Gastrocnemius medialis (tissue), 4 donors: ENCODE measurements at regions of chr21 and their contacts with region 1.

Region 1: GRCh38 chr21:25857308-25858074 is 122.7 kb downstream of the GABPA start:
- DNase-seq: no peak
- ATAC-seq: no peak
- H3K4me3 ChIP-seq: no peak overlapping the region
- H3K27ac ChIP-seq: no peak overlapping the region
- H3K4me1 ChIP-seq: no peaks in the 10 kb centered on the region
- H3K27me3 ChIP-seq: no peaks in the 10 kb centered on the region
- CTCF ChIP-seq: no peak
- POLR2A ChIP-seq: no peak

Region 2: GRCh38 chr21:25573409-25574206 is 283.9 kb before region 1 on chr21:
- in situ Hi-C with region 1: no loop called
- intact Hi-C with region 1: no loop called
- DNase-seq: no peak
- ATAC-seq: no peak
- H3K4me3 ChIP-seq: no peak overlapping the region
- H3K27ac ChIP-seq: no peak overlapping the region
- H3K4me1 ChIP-seq: no peaks in the 10 kb centered on the region
- H3K27me3 ChIP-seq: no peaks in the 10 kb centered on the region
- CTCF ChIP-seq: no peak
- POLR2A ChIP-seq: no peak

Region 3: GRCh38 chr21:25881525-25882376 is 24.3 kb after region 1 on chr21:
- in situ Hi-C with region 1: no loop called
- intact Hi-C with region 1: no loop called
- DNase-seq: peak; percentile 10 to 27
- ATAC-seq: peak in 1 of 2 donors; percentile 75
- H3K4me3 ChIP-seq: no peak overlapping the region
- H3K27ac ChIP-seq: no peak overlapping the region
- H3K4me1 ChIP-seq: no peaks in the 10 kb centered on the region
- H3K27me3 ChIP-seq: no peaks in the 10 kb centered on the region
- CTCF ChIP-seq: peak; percentile 78 to 91 (median 82)
- POLR2A ChIP-seq: no peak

Region 4: GRCh38 chr21:25903602-25904001 is 46.1 kb after region 1 on chr21:
- in situ Hi-C with region 1: no loop called
- intact Hi-C with region 1: loop called (anchors 1 kb)
- DNase-seq: no peak
- ATAC-seq: peak; percentile 22 to 44
- H3K4me3 ChIP-seq: no peak overlapping the region
- H3K27ac ChIP-seq: no peak overlapping the region
- H3K4me1 ChIP-seq: peaks cover 0 to under 1% of the 10 kb centered on the region in 2 donors
- H3K27me3 ChIP-seq: no peaks in the 10 kb centered on the region
- CTCF ChIP-seq: no peak
- POLR2A ChIP-seq: no peak